AG04450 (cell line): ENCODE measurements at regions of chr6 and their contacts with region 1.

Region 1: GRCh38 chr6:99868074-99868702 is 125.8 kb downstream of the MCHR2 start:
- DNase-seq: peak; percentile 36
- H3K4me3 ChIP-seq: no peak overlapping the region
- H3K27ac ChIP-seq: no peak overlapping the region
- H3K27me3 ChIP-seq: peaks cover 10% of the 10 kb centered on the region
- CTCF ChIP-seq: peak; percentile 88

Region 2: DNA sequence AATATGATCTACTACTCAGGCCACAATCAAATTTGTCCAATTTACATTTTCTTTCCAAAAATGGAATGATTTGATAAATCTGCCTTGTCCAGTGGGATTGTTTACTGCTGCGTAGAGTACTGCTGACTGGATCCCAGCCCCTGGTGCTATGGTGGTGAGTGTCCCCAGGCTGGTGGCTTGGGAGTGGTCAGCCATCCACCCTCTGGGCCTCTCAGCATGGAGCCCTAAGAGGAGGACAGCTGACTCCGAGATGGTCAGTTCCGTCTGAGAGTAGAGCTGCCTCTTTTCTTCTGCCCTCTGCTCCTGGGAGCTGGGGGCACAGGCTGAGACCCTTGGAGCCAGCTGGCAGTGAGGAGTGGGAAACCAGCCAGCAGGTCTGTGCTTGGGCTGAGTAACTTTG is 238.9 kb before region 1 on chr6:
- CTCF ChIA-PET with region 1: no interaction called
- POLR2A ChIA-PET with region 1: no interaction called
- DNase-seq: no peak
- H3K4me3 ChIP-seq: no peak overlapping the region
- H3K27ac ChIP-seq: no peak overlapping the region
- H3K27me3 ChIP-seq: no peaks in the 10 kb centered on the region
- CTCF ChIP-seq: no peak

Region 3: GRCh38 chr6:99882128-99882702 is 14.0 kb after region 1 on chr6:
- CTCF ChIA-PET with region 1: interaction called, 34 read pairs
- POLR2A ChIA-PET with region 1: no interaction called
- DNase-seq: no peak
- H3K4me3 ChIP-seq: no peak overlapping the region
- H3K27ac ChIP-seq: no peak overlapping the region
- H3K27me3 ChIP-seq: peaks cover 3% of the 10 kb centered on the region
- CTCF ChIP-seq: no peak

Region 4: DNA sequence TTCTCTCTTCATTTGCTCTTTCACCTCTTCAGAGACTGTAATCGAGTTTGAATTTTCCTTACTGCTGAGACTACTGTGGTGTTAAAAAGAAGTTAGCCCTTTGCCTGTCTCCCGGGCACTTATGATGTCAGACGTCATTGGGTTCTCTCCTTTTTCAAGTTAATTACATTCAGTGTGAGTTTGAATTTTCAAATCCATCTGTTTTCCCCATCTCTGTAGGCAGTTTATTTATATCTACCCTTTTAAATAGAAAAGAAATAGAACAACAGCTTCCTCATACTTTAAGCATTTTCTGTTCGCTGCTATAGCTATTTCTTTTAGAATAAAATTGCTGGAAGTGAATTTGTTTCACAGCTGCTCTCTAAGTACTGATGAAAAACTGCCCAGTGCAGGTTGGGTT is 44.5 kb after region 1 on chr6:
- CTCF ChIA-PET with region 1: interaction called, 97 read pairs
- POLR2A ChIA-PET with region 1: no interaction called
- DNase-seq: no peak
- H3K4me3 ChIP-seq: no peak overlapping the region
- H3K27ac ChIP-seq: no peak overlapping the region
- H3K27me3 ChIP-seq: no peaks in the 10 kb centered on the region
- CTCF ChIP-seq: no peak

Region 5: GRCh38 chr6:100088009-100088408 is 219.8 kb after region 1 on chr6:
- CTCF ChIA-PET with region 1: interaction called, 30 read pairs
- POLR2A ChIA-PET with region 1: no interaction called
- DNase-seq: peak; percentile 4
- H3K4me3 ChIP-seq: no peak overlapping the region
- H3K27ac ChIP-seq: no peak overlapping the region
- H3K27me3 ChIP-seq: no peaks in the 10 kb centered on the region
- CTCF ChIP-seq: no peak

Region 6: GRCh38 chr6:100105138-100105753 is 237.1 kb after region 1 on chr6:
- CTCF ChIA-PET with region 1: interaction called, 359 read pairs
- POLR2A ChIA-PET with region 1: no interaction called
- DNase-seq: no peak
- H3K4me3 ChIP-seq: no peak overlapping the region
- H3K27ac ChIP-seq: no peak overlapping the region
- H3K27me3 ChIP-seq: peaks cover 13% of the 10 kb centered on the region
- CTCF ChIP-seq: no peak

Region 7: GRCh38 chr6:100455230-100456124 is 587.3 kb after region 1 on chr6:
- CTCF ChIA-PET with region 1: no interaction called
- POLR2A ChIA-PET with region 1: no interaction called
- DNase-seq: no peak
- H3K4me3 ChIP-seq: no peak overlapping the region
- H3K27ac ChIP-seq: no peak overlapping the region
- H3K27me3 ChIP-seq: peaks cover 99% of the 10 kb centered on the region
- CTCF ChIP-seq: no peak